Activated CD4-positive, alpha-beta T cell treated with anti-CD3 and anti-CD28 coated beads, Interleukin-2, amount 10 ng/mL, durations not matched to agents 24 days and 14 days (primary cell): ENCODE measurements at regions of chr19 and their contacts with region 1.

Region 1: GRCh38 chr19:46661020-46661731 is at the start of gene DACT3:
- DNase-seq: peak; percentile 100
- H3K4me3 Mint-ChIP-seq: peak within 1 kb of the TSS; percentile 80
- H3K27ac Mint-ChIP-seq: peak within 1 kb of the TSS; percentile 85
- H3K4me1 Mint-ChIP-seq: peaks cover 15% of the 10 kb centered on the region
- H3K27me3 Mint-ChIP-seq: peaks cover 29% of the 10 kb centered on the region
- total RNA-seq, gene DACT3: 3.2 and 3.7 TPM in 2 replicates

Region 2: DNA sequence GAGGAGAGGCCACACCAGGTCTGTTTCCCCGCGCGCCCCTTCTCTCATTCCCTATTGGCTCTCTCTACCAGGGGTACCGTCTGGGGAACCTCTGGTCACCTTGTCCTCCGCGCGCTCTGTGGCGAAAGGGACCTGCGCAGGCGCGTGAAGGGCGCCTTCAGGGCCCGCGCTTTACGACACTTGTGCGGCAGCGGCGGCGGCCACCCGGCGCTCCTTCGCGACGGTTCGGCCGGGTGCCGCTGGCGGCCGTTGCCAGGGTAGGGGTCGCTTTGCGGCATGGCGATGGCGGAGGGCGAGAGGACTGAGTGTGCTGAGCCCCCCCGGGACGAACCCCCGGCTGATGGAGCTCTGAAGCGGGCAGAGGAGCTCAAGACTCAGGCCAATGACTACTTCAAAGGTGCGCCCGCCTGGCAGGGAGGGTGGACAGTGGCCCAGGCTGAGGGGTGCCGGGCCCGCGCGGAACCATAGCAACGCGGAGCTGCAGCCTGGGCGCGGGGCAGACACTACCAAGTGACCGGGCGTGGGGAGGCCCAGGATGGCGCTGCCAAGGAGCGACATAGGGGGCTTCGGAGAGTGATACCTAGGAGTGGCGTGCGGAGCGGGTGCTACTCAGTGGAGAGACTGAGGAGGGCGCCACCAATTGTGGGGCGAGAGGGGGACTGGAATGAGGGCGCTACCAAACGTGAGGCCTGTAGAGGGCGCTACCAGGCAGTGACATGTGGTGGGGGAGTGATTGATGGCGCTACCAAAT is 314.2 kb before region 1 on chr19 and contains the start of gene PPP5C:
- intact Hi-C with region 1: loop called (anchors 5 kb)
- DNase-seq: peak; percentile 96
- H3K4me3 Mint-ChIP-seq: peak within 1 kb of the TSS; percentile 93
- H3K27ac Mint-ChIP-seq: peak within 1 kb of the TSS; percentile 93
- H3K4me1 Mint-ChIP-seq: peaks cover 50% of the 10 kb centered on the region
- H3K27me3 Mint-ChIP-seq: peaks cover 19% of the 10 kb centered on the region
- total RNA-seq, gene PPP5C: 160 and 169 TPM in 2 replicates

Region 3: DNA sequence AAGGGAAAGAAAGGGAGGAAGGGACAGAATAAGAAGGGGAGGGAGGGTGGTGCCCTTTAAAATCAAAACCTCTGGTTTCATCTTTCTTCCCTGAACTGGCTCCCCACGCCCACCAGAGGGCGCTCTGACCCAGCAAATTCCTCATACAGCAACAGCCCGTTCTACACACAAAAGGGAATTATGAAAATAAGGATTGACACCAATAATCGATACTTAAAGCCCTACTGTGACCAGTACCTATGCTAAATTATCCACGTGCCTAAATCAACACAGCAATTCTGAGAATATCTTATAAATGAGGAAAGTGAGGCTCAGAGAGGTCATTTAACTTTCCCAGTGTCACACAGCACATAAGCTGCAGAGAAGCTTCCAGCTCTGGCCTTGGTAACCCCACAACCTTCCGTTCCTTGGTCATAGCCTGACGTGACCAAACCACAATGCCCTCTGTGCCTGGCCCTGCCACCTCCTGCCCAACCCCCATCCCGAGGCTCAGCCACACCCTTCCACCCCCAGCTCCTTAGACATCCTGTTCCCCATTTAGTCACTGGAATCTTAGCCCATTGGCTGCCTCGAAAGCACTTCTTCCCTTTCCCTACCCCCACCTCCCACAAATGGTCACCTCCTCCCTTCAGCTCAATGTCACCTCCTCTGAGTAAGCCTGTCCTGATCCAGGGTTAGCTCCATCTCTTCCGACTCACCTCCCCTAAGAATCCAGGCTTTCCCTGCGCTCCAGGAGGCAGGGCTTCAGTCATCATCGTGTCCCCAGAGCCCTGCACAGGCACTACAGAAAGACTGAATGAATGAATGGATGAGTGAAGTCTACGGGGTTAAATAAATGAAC is 131.3 kb before region 1 on chr19:
- intact Hi-C with region 1: loop called (anchors 1 kb)
- DNase-seq: peak; percentile 92
- H3K4me3 Mint-ChIP-seq: peak overlapping the region; percentile 8
- H3K27ac Mint-ChIP-seq: peak overlapping the region; percentile 39
- H3K4me1 Mint-ChIP-seq: peaks cover 23% of the 10 kb centered on the region
- H3K27me3 Mint-ChIP-seq: no peaks in the 10 kb centered on the region

Region 4: GRCh38 chr19:46571531-46571930 is 89.6 kb before region 1 on chr19:
- intact Hi-C with region 1: no loop called
- DNase-seq: peak; percentile 75
- H3K4me3 Mint-ChIP-seq: no peak overlapping the region
- H3K27ac Mint-ChIP-seq: no peak overlapping the region
- H3K4me1 Mint-ChIP-seq: peaks cover 10% of the 10 kb centered on the region
- H3K27me3 Mint-ChIP-seq: peaks cover 17% of the 10 kb centered on the region

Region 5: DNA sequence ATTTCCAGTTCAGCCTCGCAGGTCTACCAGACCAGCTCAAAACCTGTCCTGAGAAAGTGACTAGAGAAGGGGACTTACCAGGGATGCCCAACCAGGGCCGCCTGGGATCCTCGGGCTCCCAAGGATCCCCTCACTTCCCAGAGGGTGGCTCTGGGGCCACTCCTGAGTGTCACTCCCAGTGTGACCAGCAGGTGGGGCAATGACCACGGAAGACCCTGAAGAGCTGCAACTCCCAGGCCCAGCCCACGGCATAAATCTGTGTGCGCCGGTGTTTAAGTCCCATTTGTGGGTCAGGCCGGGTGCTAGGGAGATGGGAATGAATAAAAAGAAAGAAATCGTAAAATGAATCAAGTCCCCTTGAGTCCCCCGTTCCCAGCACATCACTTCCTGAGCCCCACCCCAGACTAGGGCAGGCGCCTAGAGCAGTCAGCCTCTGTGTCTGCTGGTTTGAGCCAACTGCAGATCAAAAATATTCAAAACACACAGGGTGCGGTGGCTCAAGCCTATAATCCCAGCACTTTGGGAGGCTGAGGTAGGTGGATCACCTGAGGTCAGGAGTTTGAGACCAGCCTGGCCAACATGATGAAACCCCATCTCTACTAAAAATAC is 47.0 kb before region 1 on chr19:
- intact Hi-C with region 1: loop called (anchors 1 kb)
- DNase-seq: peak; percentile 95
- H3K4me3 Mint-ChIP-seq: peak overlapping the region; percentile 53
- H3K27ac Mint-ChIP-seq: peak overlapping the region; percentile 71
- H3K4me1 Mint-ChIP-seq: peaks cover 58% of the 10 kb centered on the region
- H3K27me3 Mint-ChIP-seq: no peaks in the 10 kb centered on the region

Region 6: GRCh38 chr19:46634045-46634655 is 27.0 kb before region 1 on chr19:
- intact Hi-C with region 1: loop called (anchors 1 kb)
- DNase-seq: peak; percentile 99
- H3K4me3 Mint-ChIP-seq: peak overlapping the region; percentile 87
- H3K27ac Mint-ChIP-seq: peak overlapping the region; percentile 82
- H3K4me1 Mint-ChIP-seq: peaks cover 15% of the 10 kb centered on the region
- H3K27me3 Mint-ChIP-seq: peaks cover 5% of the 10 kb centered on the region

Region 7: DNA sequence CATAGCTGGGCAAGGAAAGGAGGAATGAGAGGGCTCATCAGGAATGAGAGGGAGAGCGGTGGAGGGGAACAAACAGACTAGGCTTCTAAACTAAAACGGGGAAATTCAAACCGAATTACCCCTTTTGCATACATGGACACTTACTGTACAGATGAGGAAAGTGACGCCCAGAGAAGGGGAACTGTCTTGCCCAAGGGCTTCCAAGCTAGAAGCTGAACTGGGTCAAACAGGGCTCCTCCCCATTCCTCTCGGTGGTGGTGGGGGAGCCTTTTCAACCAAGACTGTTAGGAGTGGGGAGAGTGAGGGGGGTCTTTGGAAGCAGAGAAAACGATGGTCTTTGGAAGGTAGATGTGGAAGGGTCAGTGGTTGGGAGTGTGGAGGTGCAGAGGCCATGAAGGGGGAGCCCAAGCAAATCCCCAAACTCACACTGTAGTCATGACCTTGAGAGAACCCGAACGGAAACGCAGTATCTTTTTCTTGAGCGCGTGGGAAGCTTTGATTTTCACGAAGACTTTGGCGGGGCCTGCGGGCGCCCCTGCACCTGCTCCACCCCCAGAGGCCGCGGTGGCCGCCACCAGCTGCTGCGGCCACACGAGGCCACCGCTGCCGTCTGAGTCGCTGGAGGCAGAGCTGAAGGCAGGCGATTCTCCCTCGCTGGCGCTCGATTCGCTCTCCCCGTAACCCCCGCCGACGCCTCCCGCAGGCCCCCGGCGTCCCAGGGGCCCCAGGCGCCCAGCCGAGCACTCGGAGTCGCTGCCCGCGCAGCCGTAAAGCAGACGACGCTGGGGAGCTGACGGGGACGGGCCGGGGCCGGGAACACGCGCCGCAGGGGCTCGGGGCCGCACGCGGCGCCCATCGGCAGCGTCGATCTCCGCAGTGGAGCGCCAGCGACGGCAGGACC is 12.9 kb before region 1 on chr19:
- intact Hi-C with region 1: no loop called
- DNase-seq: no peak
- H3K4me3 Mint-ChIP-seq: peak overlapping the region; percentile 29
- H3K27ac Mint-ChIP-seq: peak overlapping the region; percentile 7
- H3K4me1 Mint-ChIP-seq: peaks cover 6% of the 10 kb centered on the region
- H3K27me3 Mint-ChIP-seq: peaks cover 53% of the 10 kb centered on the region